CD14-positive monocyte (primary cell): ENCODE measurements at regions of chr18 and their contacts with region 1.

Region 1: DNA sequence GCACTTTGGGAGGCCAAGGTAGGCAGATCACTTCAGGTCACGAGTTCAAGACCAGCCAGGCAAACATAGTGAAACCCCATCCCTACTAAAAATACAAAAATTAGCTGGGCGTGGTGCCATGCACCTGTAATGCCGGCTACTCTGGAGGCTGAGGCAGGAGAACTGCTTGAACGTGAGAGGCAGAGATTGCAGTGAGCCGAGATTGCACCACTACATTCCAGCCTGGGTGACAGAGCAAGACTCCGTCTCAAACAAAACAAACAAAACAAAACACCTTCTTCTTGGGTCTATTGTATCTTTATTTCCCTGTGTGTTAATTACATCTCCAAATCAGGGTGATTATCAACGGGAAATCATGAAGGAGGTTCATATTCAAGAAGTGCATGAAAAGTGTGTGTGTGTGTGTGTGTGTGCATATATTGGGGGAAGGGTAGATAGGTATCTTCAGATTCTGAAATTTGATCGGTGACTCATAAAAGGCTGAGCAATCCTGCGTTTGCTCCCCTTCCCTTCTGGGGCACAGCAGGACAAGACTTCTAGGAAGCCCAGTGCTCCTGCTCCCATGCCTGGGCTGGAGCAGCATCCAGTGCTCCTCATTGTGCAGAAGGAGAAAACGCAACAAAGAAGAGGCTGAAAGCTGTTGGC is 25.7 kb downstream of the MC5R start:
- DNase-seq: no peak
- H3K4me3 ChIP-seq: no peak overlapping the region
- H3K4me3 Mint-ChIP-seq: no peak overlapping the region
- H3K27ac ChIP-seq: no peak overlapping the region
- H3K27ac Mint-ChIP-seq: no peak overlapping the region
- H3K4me1 ChIP-seq: no peaks in the 10 kb centered on the region
- H3K4me1 Mint-ChIP-seq: no peaks in the 10 kb centered on the region
- H3K27me3 ChIP-seq: no peaks in the 10 kb centered on the region
- H3K27me3 Mint-ChIP-seq: peaks cover 4 to 7% (median 5%) of the 10 kb centered on the region in 3 donors
- CTCF ChIP-seq: no peak

Region 2: DNA sequence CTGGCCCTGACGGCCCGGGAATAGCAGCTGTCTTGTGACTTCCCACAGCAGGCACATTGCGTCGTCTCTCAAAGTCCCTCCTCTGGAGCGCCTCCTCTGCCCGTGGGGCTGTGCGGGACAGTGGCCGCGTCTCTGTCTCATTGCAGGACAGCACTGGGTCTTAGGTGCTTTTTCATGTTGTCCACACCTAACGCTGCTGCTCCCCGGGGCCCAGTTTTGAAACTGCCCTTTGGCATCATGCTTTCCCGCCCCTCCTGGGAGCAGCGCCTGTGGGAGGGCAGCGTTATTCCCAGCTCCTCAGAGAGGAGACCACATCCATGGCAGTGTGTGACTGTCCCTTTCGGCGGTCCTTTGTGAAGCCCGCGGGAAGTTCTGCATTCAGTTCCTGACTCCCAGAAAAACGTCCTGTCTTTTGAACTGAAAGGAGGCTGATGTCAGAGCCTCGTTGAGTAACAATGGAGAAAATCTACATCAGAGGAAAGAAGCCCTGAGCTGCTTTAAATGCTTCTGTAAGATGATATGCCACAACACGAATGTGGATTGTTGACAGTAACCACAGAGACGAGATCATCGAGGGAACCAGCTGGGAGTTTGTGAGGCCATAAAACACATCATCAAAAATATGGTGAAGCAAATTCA is 349.3 kb before region 1 on chr18:
- intact Hi-C with region 1: no loop called
- DNase-seq: no peak
- H3K4me3 ChIP-seq: no peak overlapping the region
- H3K4me3 Mint-ChIP-seq: no peak overlapping the region
- H3K27ac ChIP-seq: no peak overlapping the region
- H3K27ac Mint-ChIP-seq: no peak overlapping the region
- H3K4me1 ChIP-seq: no peaks in the 10 kb centered on the region
- H3K4me1 Mint-ChIP-seq: peaks cover 2% of the 10 kb centered on the region
- H3K27me3 ChIP-seq: no peaks in the 10 kb centered on the region
- H3K27me3 Mint-ChIP-seq: peaks cover 0 to 8% (median under 1%) of the 10 kb centered on the region in 3 donors
- CTCF ChIP-seq: no peak

Region 3: DNA sequence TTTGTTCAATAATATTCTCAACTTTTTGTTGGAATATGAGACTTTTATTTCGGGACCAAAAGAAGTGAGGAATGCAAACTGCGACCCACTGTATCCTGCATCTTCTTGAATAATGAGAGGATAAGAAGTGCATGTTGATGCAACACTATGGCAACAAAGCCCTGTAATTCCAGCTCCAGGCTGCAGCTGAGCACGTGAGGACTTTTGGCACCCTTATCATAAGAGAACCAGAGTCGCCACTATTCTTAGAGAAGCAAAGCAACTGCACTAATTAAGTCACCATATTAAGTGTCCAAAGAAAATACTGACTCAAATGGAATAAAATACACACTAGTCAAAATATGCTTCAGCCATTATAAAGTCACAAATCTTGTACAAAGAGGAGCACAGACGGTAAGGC is 189.1 kb before region 1 on chr18:
- intact Hi-C with region 1: no loop called
- DNase-seq: no peak
- H3K4me3 ChIP-seq: no peak overlapping the region
- H3K4me3 Mint-ChIP-seq: no peak overlapping the region
- H3K27ac ChIP-seq: no peak overlapping the region
- H3K27ac Mint-ChIP-seq: no peak overlapping the region
- H3K4me1 ChIP-seq: no peaks in the 10 kb centered on the region
- H3K4me1 Mint-ChIP-seq: no peaks in the 10 kb centered on the region
- H3K27me3 ChIP-seq: no peaks in the 10 kb centered on the region
- H3K27me3 Mint-ChIP-seq: peaks cover 0 to 4% (median 0%) of the 10 kb centered on the region in 3 donors
- CTCF ChIP-seq: no peak

Region 4: DNA sequence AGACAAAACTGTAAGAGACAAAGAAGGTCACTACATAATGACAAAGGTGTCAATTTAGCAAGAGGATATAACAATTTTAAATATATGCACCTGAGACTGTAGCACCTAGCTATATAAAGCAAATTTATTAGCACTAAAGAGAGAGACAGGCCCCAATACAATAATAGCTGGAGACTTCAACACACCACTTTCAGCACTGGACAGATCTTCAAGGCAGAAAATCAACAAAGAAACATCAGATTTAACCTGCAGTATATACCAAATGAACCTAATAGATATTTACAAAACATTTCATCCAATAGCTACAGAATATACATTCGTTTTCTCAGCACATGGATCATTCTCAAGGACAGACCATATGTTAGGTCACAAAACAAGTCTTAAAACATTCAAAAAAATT is 51.0 kb after region 1 on chr18:
- intact Hi-C with region 1: loop called in 1 of 2 experiments (anchors 5 kb)
- DNase-seq: no peak
- H3K4me3 ChIP-seq: no peak overlapping the region
- H3K4me3 Mint-ChIP-seq: no peak overlapping the region
- H3K27ac ChIP-seq: no peak overlapping the region
- H3K27ac Mint-ChIP-seq: no peak overlapping the region
- H3K4me1 ChIP-seq: no peaks in the 10 kb centered on the region
- H3K4me1 Mint-ChIP-seq: no peaks in the 10 kb centered on the region
- H3K27me3 ChIP-seq: no peaks in the 10 kb centered on the region
- H3K27me3 Mint-ChIP-seq: peaks cover 0 to 4% (median 2%) of the 10 kb centered on the region in 3 donors
- CTCF ChIP-seq: no peak